Caco-2 (cell line): ENCODE measurements at regions of chr10 and their contacts with region 1.

Region 1: DNA sequence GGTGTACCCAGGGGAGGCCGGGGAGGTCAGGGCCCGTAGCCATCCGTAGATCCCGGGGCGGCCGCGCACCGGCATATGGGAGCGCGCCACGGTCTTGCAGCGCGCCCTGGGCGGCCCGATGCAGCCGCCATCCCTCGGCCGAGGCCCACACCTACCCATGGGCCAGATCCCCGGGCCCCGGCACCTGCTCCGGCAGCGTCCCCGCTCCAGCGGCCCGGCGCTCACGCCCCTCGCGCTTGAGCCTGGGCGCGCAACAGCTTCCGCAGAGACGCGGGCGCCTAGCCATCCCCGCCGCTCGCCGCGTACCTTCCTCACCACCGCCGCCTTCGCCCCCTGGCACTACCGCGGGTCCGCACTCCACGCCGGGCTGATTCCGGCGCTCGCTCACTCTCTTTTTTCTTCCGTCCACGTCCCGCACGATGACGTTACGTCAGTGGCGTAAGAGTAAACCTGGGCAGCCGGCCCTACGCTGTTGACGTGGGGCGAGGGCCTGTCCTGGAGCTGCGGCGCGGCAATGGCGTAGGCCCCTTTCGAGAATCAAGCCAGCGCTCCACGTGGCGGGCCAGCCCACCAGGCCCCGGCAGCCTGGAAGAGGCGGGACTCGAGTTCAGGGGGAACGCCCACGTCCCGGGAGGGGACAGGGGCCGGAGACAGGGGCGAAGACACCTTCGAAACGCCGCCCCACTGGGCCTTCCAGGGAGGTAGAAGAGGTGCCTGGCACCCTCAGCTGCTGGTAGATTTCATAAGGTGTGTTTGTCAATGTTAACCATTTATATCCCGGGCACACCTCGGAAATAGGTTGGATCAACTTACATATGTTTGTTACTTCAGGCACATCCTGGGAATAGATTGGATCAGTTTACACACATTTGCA is at the start of gene ALDH18A1:
- DNase-seq: peak; percentile 95 to 96
- H3K4me3 ChIP-seq: peak within 1 kb of the TSS; percentile 99
- H3K4me3 Mint-ChIP-seq: peak within 1 kb of the TSS; percentile 99
- H3K27ac Mint-ChIP-seq: peak within 1 kb of the TSS; percentile 98
- H3K4me1 ChIP-seq: peaks cover 6% of the 10 kb centered on the region
- H3K4me1 Mint-ChIP-seq: peaks cover 13% of the 10 kb centered on the region
- H3K27me3 ChIP-seq: no peaks in the 10 kb centered on the region
- H3K27me3 Mint-ChIP-seq: no peaks in the 10 kb centered on the region
- CTCF ChIP-seq: no peak
- total RNA-seq, gene ALDH18A1: 166 and 169 TPM in 2 replicates

Region 2: GRCh38 chr10:95675403-95676112 is 19.0 kb after region 1 on chr10:
- CTCF ChIA-PET with region 1: interaction called, 3 read pairs
- POLR2A ChIA-PET with region 1: interaction called, 3 read pairs
- intact Hi-C with region 1: loop called (anchors 2 kb)
- DNase-seq: peak in 1 of 2 experiments; percentile 67
- H3K4me3 ChIP-seq: no peak overlapping the region
- H3K4me3 Mint-ChIP-seq: peak overlapping the region; percentile 53
- H3K27ac Mint-ChIP-seq: peak overlapping the region; percentile 90
- H3K4me1 ChIP-seq: peaks cover 27% of the 10 kb centered on the region
- H3K4me1 Mint-ChIP-seq: peaks cover 5% of the 10 kb centered on the region
- H3K27me3 ChIP-seq: no peaks in the 10 kb centered on the region
- H3K27me3 Mint-ChIP-seq: no peaks in the 10 kb centered on the region
- CTCF ChIP-seq: no peak